RWPE1 (cell line): ENCODE measurements at regions of chr1 and their contacts with region 1.

Region 1: GRCh38 chr1:209368864-209369598 is 214.5 kb upstream of the CAMK1G start:
- DNase-seq: peak; percentile 74
- H3K27ac ChIP-seq: peak overlapping the region; percentile 93
- CTCF ChIP-seq: no peak

Region 2: DNA sequence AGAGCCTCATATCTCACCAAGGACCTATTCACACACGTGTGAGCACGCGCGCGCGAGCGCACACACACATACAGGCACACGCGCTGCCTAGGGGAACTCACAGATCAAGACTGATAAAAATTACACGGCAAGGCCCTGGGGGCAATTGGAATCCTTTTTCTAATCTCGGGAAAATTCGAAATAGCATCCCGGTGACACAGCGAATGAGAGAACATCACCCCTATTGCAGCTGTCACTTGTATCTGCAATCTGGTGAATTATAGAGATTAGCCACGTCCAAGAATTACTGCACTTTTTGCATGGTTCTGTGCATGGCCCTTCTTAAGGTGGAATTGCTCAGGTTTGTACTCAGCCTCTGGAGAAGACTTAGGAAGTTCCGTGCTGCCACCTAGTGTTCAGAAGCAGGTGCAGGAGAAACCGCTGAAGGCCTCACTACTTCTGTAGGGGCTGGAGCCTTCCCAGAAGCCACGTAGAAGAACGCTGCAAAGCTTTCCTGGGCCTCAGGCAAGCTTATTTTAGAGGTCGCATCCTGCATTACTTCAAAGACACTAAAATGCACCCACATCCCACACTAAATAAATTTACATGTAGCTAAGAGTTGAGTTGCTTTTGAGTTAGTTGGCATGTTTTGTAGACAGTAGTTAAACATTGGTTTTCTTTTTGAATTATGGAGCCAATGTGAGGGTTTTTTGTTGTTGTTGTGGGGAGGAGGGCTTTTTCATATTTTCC is 14.8 kb before region 1 on chr1:
- CTCF ChIA-PET with region 1: interaction called, 10 read pairs
- POLR2A ChIA-PET with region 1: no interaction called
- DNase-seq: peak; percentile 86
- H3K27ac ChIP-seq: peak overlapping the region; percentile 95
- CTCF ChIP-seq: peak; percentile 86

Region 3: DNA sequence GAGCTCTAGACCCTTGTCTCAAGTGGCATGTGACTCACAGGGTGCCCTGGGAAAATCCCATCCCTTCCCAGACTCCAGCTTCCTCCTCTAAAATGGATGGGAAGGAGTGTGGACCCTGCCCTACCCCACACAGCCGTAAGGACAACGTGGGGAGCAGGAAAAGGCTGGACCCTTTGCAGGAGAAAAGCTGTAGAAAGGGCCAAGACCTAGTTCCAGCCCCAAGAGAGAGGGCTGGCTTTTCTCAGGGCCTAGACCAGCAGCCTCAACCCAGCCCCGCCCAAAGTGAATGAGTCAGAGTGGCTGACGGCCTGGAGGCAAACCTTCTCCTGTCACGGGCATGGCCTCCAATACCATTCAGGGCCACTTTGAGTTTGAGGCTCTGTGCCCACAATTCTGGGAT is 282.1 kb after region 1 on chr1:
- CTCF ChIA-PET with region 1: no interaction called
- POLR2A ChIA-PET with region 1: no interaction called
- DNase-seq: peak; percentile 89
- H3K27ac ChIP-seq: peak overlapping the region; percentile 95
- CTCF ChIP-seq: no peak